HepG2 (cell line): ENCODE measurements at regions of chr4 and their contacts with region 1.

Region 1: GRCh38 chr4:6909073-6909965 is at the start of gene TBC1D14:
- DNase-seq: peak; percentile 74
- ATAC-seq: peak; percentile 73
- H3K4me3 ChIP-seq: peak within 1 kb of the TSS; percentile 63 to 92 (median 83)
- H3K27ac ChIP-seq: peak within 1 kb of the TSS; percentile 99
- H3K4me1 ChIP-seq: peaks cover 74% of the 10 kb centered on the region
- H3K27me3 ChIP-seq: no peaks in the 10 kb centered on the region; a peak in 1 of 5 replicates
- CTCF ChIP-seq: peak; percentile 43
- EP300 ChIP-seq: 0 out of 4 replicates have a peak, but pooled peaks of 1 of the 2 experiments have one; percentile 30
- POLR2A ChIP-seq: peak in 1 of 2 experiments; percentile 58; a peak in 2 of 4 replicates
- RAD21 ChIP-seq: peak; percentile 38
- total RNA-seq, gene TBC1D14: 46.5 and 53.3 TPM in 2 replicates

Region 2: GRCh38 chr4:6855692-6856297 is 53.5 kb before region 1 on chr4:
- CTCF ChIA-PET with region 1: no interaction called
- POLR2A ChIA-PET with region 1: no interaction called
- in situ Hi-C with region 1: no loop called
- intact Hi-C with region 1: no loop called
- DNase-seq: peak; percentile 20
- ATAC-seq: no peak
- H3K4me3 ChIP-seq: no peak overlapping the region
- H3K27ac ChIP-seq: peak overlapping the region; percentile 34
- H3K4me1 ChIP-seq: peaks cover 34% of the 10 kb centered on the region
- H3K27me3 ChIP-seq: no peaks in the 10 kb centered on the region
- CTCF ChIP-seq: no peak
- EP300 ChIP-seq: no peak
- POLR2A ChIP-seq: no peak
- RAD21 ChIP-seq: no peak

Region 3: GRCh38 chr4:6898763-6899162 is 10.6 kb before region 1 on chr4:
- CTCF ChIA-PET with region 1: interaction called, 12 read pairs
- POLR2A ChIA-PET with region 1: interaction called, 215 read pairs
- in situ Hi-C with region 1: no loop called
- intact Hi-C with region 1: loop called (anchors 2 kb)
- DNase-seq: no peak
- ATAC-seq: no peak
- H3K4me3 ChIP-seq: no peak overlapping the region
- H3K27ac ChIP-seq: peak overlapping the region; percentile 67
- H3K4me1 ChIP-seq: peaks cover 89% of the 10 kb centered on the region
- H3K27me3 ChIP-seq: no peaks in the 10 kb centered on the region
- CTCF ChIP-seq: no peak
- EP300 ChIP-seq: no peak
- POLR2A ChIP-seq: no peak
- RAD21 ChIP-seq: no peak

Region 4: GRCh38 chr4:6935965-6936364 is 26.6 kb after region 1 on chr4:
- CTCF ChIA-PET with region 1: no interaction called
- POLR2A ChIA-PET with region 1: interaction called, 16 read pairs
- in situ Hi-C with region 1: no loop called
- intact Hi-C with region 1: no loop called
- DNase-seq: peak; percentile 56
- ATAC-seq: peak; percentile 74
- H3K4me3 ChIP-seq: no peak overlapping the region
- H3K27ac ChIP-seq: peak overlapping the region; percentile 71
- H3K4me1 ChIP-seq: peaks cover 65% of the 10 kb centered on the region
- H3K27me3 ChIP-seq: no peaks in the 10 kb centered on the region
- CTCF ChIP-seq: no peak
- EP300 ChIP-seq: no peak
- POLR2A ChIP-seq: no peak
- RAD21 ChIP-seq: no peak

Region 5: DNA sequence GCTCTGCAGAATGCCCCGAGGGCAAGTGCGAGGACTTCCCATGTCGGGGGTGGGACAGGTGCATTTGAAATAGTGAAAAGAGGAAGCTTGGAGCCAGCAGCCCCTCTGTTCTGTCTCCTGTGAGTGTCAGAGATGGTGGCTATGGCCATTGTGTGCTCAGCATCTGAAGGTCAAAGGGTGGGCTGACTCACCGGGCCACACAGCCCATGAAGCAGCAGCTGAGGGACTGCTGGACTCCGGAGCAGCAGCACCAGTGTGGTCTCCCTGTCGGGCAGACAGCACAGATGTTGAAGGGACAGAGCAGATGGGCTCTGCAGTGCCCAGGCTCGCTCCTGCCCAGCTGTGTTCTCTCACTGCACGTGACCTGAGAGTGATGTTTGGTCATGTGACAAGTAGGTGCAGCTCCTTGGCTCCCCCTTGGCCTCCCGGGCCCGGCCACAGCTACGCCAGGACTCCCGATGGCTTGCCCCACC is 53.9 kb after region 1 on chr4:
- CTCF ChIA-PET with region 1: no interaction called
- POLR2A ChIA-PET with region 1: interaction called, 10 read pairs
- in situ Hi-C with region 1: no loop called
- intact Hi-C with region 1: no loop called
- DNase-seq: peak; percentile 48
- ATAC-seq: peak; percentile 93
- H3K4me3 ChIP-seq: no peak overlapping the region; a peak in 1 of 6 replicates
- H3K27ac ChIP-seq: no peak overlapping the region
- H3K4me1 ChIP-seq: peaks cover 47% of the 10 kb centered on the region
- H3K27me3 ChIP-seq: no peaks in the 10 kb centered on the region
- CTCF ChIP-seq: no peak
- EP300 ChIP-seq: no peak
- POLR2A ChIP-seq: no peak
- RAD21 ChIP-seq: no peak

Region 6: DNA sequence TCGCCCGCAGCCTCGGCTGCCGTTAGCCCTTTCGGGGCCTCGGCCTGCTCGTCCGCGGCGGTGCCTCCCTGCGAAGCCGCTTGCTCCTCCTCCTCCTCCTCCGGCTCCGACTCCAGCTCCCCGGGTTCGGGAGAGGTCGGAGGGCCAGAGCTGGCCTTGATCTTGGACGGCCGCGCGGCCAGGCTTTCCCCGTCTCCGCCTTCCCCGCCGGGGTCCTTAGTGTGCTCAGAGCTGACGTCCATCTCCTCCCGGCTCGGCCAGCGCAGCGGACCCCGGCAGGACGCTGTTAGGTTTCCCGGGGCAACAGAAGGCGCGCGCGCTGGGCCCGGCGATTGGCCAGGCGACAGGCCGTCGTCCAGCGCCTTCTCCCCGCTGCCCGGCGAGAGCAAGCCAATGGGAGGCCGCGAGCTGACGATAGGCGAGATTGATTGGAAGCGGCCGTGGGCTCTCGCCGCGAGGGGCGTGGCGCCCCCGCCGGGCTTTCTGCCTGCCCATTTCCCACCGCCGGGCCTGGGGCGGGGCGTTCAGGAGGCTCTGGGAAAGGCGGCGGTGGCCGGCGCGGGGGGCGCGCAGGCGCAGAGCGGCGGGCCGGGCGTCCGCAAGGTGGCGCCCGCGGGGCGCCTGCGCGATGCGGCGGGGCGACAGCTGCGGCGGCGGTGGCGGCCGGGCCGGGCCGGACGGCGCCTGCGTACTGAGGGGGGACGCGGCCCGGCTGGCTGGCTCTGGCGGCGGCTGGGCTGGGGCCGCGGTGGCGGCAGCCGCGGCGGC is 133.6 kb after region 1 on chr4 and contains the start of gene TADA2B:
- CTCF ChIA-PET with region 1: no interaction called
- POLR2A ChIA-PET with region 1: interaction called, 3 read pairs
- in situ Hi-C with region 1: no loop called
- intact Hi-C with region 1: loop called (anchors 10 kb)
- DNase-seq: peak; percentile 93
- ATAC-seq: peak; percentile 93
- H3K4me3 ChIP-seq: peak within 1 kb of the TSS; percentile 78 to 99 (median 96)
- H3K27ac ChIP-seq: peak within 1 kb of the TSS; percentile 77
- H3K4me1 ChIP-seq: peaks cover 45% of the 10 kb centered on the region
- H3K27me3 ChIP-seq: peaks cover 0 to 5% of the 10 kb centered on the region in 2 experiments; a peak in 1 of 5 replicates
- CTCF ChIP-seq: peak; percentile 45; the same call in 1 of the 2 replicates
- EP300 ChIP-seq: no peak
- POLR2A ChIP-seq: no peak
- RAD21 ChIP-seq: peak; percentile 53
- total RNA-seq, gene TADA2B: 8.6 and 8.9 TPM in 2 replicates